A673 (cell line): ENCODE measurements at regions of chr14 and their contacts with region 1.

Region 1: DNA sequence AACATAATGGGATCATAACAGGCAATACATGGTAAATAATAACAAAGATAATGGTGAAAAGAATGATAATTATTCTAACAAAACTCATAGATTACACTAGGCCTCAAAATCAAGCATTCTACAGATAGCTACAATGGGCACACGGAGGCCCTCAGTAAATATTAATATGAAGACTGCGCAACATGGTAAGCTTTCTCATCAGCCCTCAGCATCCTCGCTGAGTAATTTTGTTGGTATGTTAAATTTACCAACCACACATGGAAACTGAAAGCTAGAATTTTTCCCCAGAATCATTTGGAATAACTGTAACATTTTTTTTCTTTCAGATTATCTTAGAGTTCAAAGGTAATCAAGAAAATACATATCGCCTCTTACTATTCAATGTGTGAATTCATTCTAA is 74.2 kb upstream of the PYGL start:
- DNase-seq: no peak
- H3K4me3 ChIP-seq: no peak overlapping the region
- H3K27ac ChIP-seq: no peak overlapping the region
- H3K4me1 ChIP-seq: peaks cover 5% of the 10 kb centered on the region
- H3K27me3 ChIP-seq: no peaks in the 10 kb centered on the region
- CTCF ChIP-seq: no peak

Region 2: GRCh38 chr14:51008446-51008845 is 10.1 kb before region 1 on chr14:
- CTCF ChIA-PET with region 1: no interaction called
- POLR2A ChIA-PET with region 1: interaction called, 23 read pairs
- intact Hi-C with region 1: no loop called
- DNase-seq: no peak
- H3K4me3 ChIP-seq: no peak overlapping the region
- H3K27ac ChIP-seq: no peak overlapping the region
- H3K4me1 ChIP-seq: peaks cover 29% of the 10 kb centered on the region
- H3K27me3 ChIP-seq: no peaks in the 10 kb centered on the region
- CTCF ChIP-seq: no peak